K562 (cell line): ENCODE measurements at regions of chr17 and their contacts with region 1.

Region 1: GRCh38 chr17:32142038-32142856 is at the start of gene RHOT1:
- DNase-seq: peak; percentile 65 to 83 (median 68)
- ATAC-seq: peak; percentile 69
- H3K4me3 ChIP-seq: peak within 1 kb of the TSS; percentile 86
- H3K27ac ChIP-seq: peak within 1 kb of the TSS; percentile 94
- H3K4me1 ChIP-seq: peaks cover 6 to 9% of the 10 kb centered on the region in 2 experiments; a peak in 4 of 5 replicates
- H3K27me3 ChIP-seq: no peaks in the 10 kb centered on the region
- CTCF ChIP-seq: peak; percentile 65 to 69 (median 67); a peak in 4 of 6 replicates
- EP300 ChIP-seq: no peak
- POLR2A ChIP-seq: peak; percentile 52; the same call in 1 of the 2 replicates
- RAD21 ChIP-seq: no peak
- polyA plus RNA-seq, gene RHOT1: 23.0 to 30.5 TPM

Region 2: DNA sequence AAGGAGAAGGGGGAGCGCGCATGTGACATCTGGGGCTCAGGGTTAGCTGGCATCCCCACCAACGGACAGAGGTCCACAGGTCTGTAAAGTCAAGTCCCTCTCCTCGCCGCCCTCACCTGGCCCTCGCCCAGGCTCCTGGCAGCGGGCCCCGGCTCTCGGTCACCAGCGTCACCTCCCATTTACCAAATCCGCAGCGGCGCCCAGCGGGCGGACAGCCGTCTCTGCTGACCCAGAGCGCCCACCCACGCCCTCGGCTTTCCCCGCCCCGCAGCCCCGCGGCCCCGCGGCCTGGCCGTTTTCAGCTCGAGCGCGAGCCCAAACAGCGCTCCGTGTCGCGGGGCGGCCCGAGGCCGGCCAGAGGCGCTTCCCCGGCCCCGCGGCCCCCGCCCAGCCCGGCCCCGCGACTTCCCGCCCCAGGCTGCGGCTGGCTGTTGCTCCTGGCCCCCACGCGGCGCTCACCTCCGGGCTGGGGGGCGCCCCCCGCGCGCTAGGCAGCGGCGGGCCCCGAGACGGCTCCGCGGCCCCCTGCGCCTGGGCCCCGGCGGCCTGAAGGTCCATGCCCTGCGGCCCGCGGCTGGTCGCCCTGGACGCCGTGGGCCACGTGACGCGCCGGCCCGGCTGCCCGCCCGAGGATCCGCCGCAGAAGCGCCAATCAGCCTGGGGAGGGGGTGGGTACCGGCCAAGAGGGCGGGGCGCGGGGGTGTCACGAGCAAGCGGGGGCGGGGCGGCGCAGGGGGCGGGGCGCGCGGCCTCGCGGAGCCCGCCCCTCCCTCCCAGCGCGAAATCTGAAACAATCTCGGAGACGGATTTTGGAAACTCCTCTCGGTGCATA is 283.4 kb before region 1 on chr17 and contains the start of gene COPRS:
- CTCF ChIA-PET with region 1: no interaction called
- POLR2A ChIA-PET with region 1: no interaction called
- in situ Hi-C with region 1: no loop called
- intact Hi-C with region 1: no loop called
- DNase-seq: peak; percentile 89 to 97 (median 96)
- ATAC-seq: peak; percentile 92
- H3K4me3 ChIP-seq: peak within 1 kb of the TSS; percentile 68
- H3K27ac ChIP-seq: peak within 1 kb of the TSS; percentile 65; the same call in 2 of the 3 replicates
- H3K4me1 ChIP-seq: peaks cover 18 to 20% of the 10 kb centered on the region in 2 experiments
- H3K27me3 ChIP-seq: no peaks in the 10 kb centered on the region
- CTCF ChIP-seq: peak in 1 of 3 experiments; percentile 18; a peak in 1 of 6 replicates
- EP300 ChIP-seq: no peak
- POLR2A ChIP-seq: no peak
- RAD21 ChIP-seq: 0 out of 4 replicates have a peak, but pooled peaks of 1 of the 2 experiments have one; percentile 13
- polyA plus RNA-seq, gene COPRS: 11.9 to 13.7 TPM

Region 3: DNA sequence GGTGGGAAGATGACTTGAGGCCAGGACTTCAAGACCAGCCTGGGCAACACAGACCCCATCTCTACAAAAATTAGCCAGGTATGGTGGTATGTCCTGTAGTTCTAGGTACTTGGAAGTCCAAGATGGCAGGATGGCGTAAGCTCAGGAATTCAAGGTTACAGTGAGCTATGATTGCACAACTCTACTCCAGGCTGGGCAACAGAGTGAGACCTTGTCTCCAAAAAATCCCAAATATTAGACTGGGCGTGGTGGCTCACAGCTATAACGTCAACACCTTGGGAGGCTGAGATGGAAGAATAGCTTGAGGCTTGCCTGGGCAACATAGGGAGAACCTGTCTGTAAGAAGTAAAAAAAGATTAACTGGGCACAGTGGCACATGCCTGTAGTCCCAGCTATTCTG is 174.6 kb before region 1 on chr17:
- CTCF ChIA-PET with region 1: no interaction called
- POLR2A ChIA-PET with region 1: no interaction called
- in situ Hi-C with region 1: no loop called
- intact Hi-C with region 1: no loop called
- DNase-seq: no peak
- ATAC-seq: no peak
- H3K4me3 ChIP-seq: no peak overlapping the region
- H3K27ac ChIP-seq: no peak overlapping the region
- H3K4me1 ChIP-seq: no peaks in the 10 kb centered on the region; a peak in 1 of 5 replicates
- H3K27me3 ChIP-seq: no peaks in the 10 kb centered on the region
- CTCF ChIP-seq: no peak
- EP300 ChIP-seq: no peak
- POLR2A ChIP-seq: no peak
- RAD21 ChIP-seq: no peak

Region 4: GRCh38 chr17:32157224-32157623 is 15.0 kb after region 1 on chr17:
- CTCF ChIA-PET with region 1: no interaction called
- POLR2A ChIA-PET with region 1: interaction called, 10 read pairs
- in situ Hi-C with region 1: no loop called
- intact Hi-C with region 1: no loop called
- DNase-seq: no peak
- ATAC-seq: no peak
- H3K4me3 ChIP-seq: no peak overlapping the region
- H3K27ac ChIP-seq: no peak overlapping the region
- H3K4me1 ChIP-seq: peaks cover 0 to 15% of the 10 kb centered on the region in 2 experiments; a peak in 1 of 5 replicates
- H3K27me3 ChIP-seq: no peaks in the 10 kb centered on the region
- CTCF ChIP-seq: no peak
- EP300 ChIP-seq: no peak
- POLR2A ChIP-seq: no peak
- RAD21 ChIP-seq: no peak

Region 5: DNA sequence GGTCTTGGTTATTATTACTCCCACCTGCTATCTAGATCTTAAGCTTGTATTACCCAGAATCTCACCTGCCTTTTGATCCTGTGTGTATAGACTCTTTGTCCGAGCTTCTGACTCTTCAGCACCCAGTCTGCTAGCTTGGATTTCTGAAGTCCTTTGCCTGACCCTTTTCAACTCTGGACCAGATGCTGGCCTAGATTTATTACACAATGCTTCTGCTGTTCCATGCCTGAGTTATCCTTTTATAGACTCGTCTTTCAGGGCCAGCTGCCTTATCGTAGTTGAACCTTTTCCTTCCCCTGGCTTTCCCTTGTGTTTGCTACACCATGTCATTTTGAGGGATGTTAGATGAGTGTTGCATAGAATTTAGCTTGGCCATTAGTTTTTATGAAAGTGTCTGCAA is 32.6 kb after region 1 on chr17:
- CTCF ChIA-PET with region 1: no interaction called
- POLR2A ChIA-PET with region 1: no interaction called
- in situ Hi-C with region 1: no loop called
- intact Hi-C with region 1: loop called (anchors 5 kb)
- DNase-seq: no peak
- ATAC-seq: no peak
- H3K4me3 ChIP-seq: no peak overlapping the region
- H3K27ac ChIP-seq: no peak overlapping the region
- H3K4me1 ChIP-seq: no peaks in the 10 kb centered on the region
- H3K27me3 ChIP-seq: no peaks in the 10 kb centered on the region
- CTCF ChIP-seq: no peak
- EP300 ChIP-seq: no peak
- POLR2A ChIP-seq: no peak
- RAD21 ChIP-seq: no peak

Region 6: DNA sequence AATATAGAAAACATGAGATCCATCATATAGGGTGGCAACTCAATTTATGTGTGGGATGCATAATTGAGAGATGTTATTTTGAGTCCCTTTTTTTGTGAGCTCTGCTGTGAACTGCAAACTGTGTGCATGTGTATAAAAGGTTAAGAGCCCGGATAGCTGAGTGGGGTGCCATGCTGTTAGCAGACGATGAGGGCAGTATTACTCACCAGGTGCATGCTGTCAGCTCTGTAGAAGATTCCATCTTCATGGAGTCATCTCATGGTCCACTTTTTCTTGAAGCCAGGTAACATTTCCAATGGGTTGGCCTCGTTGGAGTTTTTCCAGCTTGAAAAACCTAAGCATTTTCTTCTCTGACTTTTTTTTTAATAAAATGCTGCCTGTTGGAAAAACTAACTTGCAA is 80.4 kb after region 1 on chr17:
- CTCF ChIA-PET with region 1: no interaction called
- POLR2A ChIA-PET with region 1: no interaction called
- in situ Hi-C with region 1: no loop called
- intact Hi-C with region 1: no loop called
- DNase-seq: no peak
- ATAC-seq: no peak
- H3K4me3 ChIP-seq: no peak overlapping the region
- H3K27ac ChIP-seq: no peak overlapping the region
- H3K4me1 ChIP-seq: no peaks in the 10 kb centered on the region
- H3K27me3 ChIP-seq: no peaks in the 10 kb centered on the region
- CTCF ChIP-seq: no peak
- EP300 ChIP-seq: no peak
- POLR2A ChIP-seq: no peak
- RAD21 ChIP-seq: no peak

Region 7: GRCh38 chr17:32723310-32723955 is 581.2 kb after region 1 on chr17:
- CTCF ChIA-PET with region 1: no interaction called
- POLR2A ChIA-PET with region 1: no interaction called
- in situ Hi-C with region 1: no loop called
- intact Hi-C with region 1: no loop called
- DNase-seq: peak in 2 of 4 experiments; percentile 24 to 49
- ATAC-seq: peak; percentile 84
- H3K4me3 ChIP-seq: no peak overlapping the region
- H3K27ac ChIP-seq: peak overlapping the region; percentile 45; the same call in 2 of the 3 replicates
- H3K4me1 ChIP-seq: peaks cover 0 to 14% of the 10 kb centered on the region in 2 experiments; a peak in 3 of 5 replicates
- H3K27me3 ChIP-seq: no peaks in the 10 kb centered on the region
- CTCF ChIP-seq: no peak
- EP300 ChIP-seq: no peak
- POLR2A ChIP-seq: no peak
- RAD21 ChIP-seq: no peak